ENCODE measurements at regions of chr7 and their contacts with region 1.

Region 1: DNA sequence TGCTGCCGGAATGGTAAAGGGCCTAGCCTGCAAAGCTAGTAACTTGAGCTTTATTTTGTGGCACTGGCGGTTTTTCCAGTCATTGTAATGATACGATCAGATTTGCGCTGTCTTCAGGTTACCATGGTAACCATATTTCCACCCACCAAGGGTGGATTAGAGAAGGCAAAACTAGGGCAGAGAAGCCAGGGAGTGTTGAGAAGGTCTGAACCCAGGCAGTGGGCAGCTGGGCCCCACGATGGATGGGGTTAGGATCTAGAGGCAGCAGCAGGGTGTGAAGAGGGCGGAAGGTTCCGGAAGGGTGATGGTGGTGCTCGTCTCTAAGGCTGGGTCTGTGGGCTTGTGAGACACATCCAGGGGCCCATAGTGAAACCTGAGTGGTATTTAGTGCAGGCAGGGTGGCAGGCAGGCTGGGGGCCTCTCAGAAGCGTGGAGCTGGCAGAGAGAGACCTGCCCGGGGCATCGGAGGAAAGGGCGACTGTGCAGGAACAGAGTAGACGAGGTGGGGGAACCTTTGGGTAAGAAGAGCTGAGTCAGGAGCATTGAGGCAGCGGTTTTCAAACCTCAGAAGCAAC is 87.9 kb upstream of the GTF2I start:
- DNase-seq: no peak
- H3K4me3 ChIP-seq: no peak overlapping the region
- H3K27ac ChIP-seq: peak overlapping the region in 2 of 3 donors; percentile 5 to 53
- H3K4me1 ChIP-seq: peaks cover 6 to 26% of the 10 kb centered on the region in 2 donors
- H3K27me3 ChIP-seq: no peaks in the 10 kb centered on the region
- CTCF ChIP-seq: no peak
- POLR2A ChIP-seq: no peak

Region 2: DNA sequence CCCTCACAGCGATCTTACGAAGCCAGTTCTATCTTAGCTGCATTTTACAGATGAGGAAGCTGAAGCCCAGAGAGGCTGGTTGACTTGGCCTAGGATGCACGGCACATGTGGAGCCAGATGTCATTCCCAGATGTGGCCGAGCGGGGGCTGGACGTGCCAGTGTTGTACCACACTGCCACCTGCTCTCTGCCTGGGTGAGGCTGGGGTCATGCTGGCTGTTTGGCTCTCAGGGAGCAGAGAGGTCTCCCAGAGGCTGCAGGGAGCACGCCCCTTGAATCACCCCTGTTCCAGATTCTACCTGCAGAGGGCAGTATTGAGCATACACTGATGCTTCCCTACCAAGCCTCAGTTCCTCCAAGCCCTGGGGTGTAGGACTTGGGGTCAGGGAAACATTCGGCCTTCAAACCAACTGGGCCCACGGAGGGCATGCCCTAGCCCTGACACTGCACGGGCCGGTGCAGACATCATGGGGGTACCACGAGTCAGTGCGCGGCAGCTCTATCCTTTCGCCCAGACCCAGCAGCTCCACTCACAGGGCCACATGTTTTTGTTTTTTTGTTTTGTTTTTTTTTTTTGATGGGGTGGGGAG is 119.7 kb before region 1 on chr7:
- intact Hi-C with region 1: loop called (anchors 10 kb)
- DNase-seq: peak; percentile 34 to 41
- H3K4me3 ChIP-seq: no peak overlapping the region
- H3K27ac ChIP-seq: no peak overlapping the region
- H3K4me1 ChIP-seq: peaks cover 5 to 9% of the 10 kb centered on the region in 2 donors
- H3K27me3 ChIP-seq: no peaks in the 10 kb centered on the region
- CTCF ChIP-seq: peak; percentile 41 to 79 (median 63)
- POLR2A ChIP-seq: no peak

Region 3: GRCh38 chr7:74684921-74685320 is 115.3 kb after region 1 on chr7:
- intact Hi-C with region 1: no loop called
- DNase-seq: no peak
- H3K4me3 ChIP-seq: no peak overlapping the region
- H3K27ac ChIP-seq: no peak overlapping the region
- H3K4me1 ChIP-seq: peaks cover 5 to 10% of the 10 kb centered on the region in 2 donors
- H3K27me3 ChIP-seq: no peaks in the 10 kb centered on the region
- CTCF ChIP-seq: no peak
- POLR2A ChIP-seq: no peak

Measured in thyroid gland (tissue), 4 donors.